ENCODE measurements at regions of chr9 and their contacts with region 1.

Region 1: GRCh38 chr9:68749568-68750279 is 44.7 kb downstream of the PIP5K1B start:
- DNase-seq: no peak
- ATAC-seq: no peak
- H3K4me3 ChIP-seq: no peak overlapping the region
- H3K27ac ChIP-seq: no peak overlapping the region
- H3K4me1 ChIP-seq: no peaks in the 10 kb centered on the region
- H3K27me3 ChIP-seq: peaks cover 18% of the 10 kb centered on the region; the same call in 1 of the 2 replicates
- CTCF ChIP-seq: no peak
- POLR2A ChIP-seq: no peak
- RAD21 ChIP-seq: no peak

Region 2: DNA sequence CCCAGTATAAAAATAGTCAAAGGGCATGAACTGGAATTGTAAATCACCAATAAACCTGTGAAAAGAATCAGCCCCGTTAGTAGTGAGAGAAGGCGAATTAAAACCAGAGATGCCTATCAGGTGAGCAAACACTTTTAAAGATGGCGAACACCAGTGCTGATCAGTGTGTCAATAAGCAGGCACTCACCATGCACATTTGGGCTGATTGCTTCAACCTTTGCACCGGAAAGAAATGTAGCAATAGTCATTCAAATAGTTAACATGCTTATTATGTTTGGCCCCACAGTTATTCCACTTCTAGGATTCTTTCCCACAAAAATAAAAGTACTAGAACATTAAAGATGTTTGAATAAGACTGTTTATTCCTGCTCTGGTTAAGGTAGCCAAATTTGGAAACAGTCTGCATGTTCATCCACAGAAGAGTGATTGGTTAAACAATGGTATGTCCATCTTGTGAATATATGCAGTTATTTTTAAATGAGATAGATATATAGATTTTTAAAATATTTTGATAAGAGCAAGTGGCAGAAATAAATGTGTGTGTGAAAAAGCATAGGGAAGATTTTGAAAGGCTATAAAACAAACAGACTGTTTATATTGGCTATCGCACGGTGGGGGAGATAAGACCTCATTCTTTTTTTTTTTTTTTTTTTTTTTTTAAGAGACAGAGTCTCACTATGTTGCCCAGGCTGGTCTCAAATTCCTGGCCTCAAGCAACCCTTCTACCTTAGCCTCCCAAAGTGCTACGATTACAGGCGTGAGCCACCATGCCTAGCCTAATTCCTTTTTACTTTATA is 67.6 kb after region 1 on chr9:
- CTCF ChIA-PET with region 1: no interaction called
- POLR2A ChIA-PET with region 1: no interaction called
- RAD21 ChIA-PET with region 1: no interaction called
- intact Hi-C with region 1: loop called (anchors 10 kb)
- DNase-seq: no peak
- ATAC-seq: no peak
- H3K4me3 ChIP-seq: no peak overlapping the region
- H3K27ac ChIP-seq: no peak overlapping the region
- H3K4me1 ChIP-seq: no peaks in the 10 kb centered on the region
- H3K27me3 ChIP-seq: peaks cover 16% of the 10 kb centered on the region; the same call in 1 of the 2 replicates
- CTCF ChIP-seq: no peak
- POLR2A ChIP-seq: no peak
- RAD21 ChIP-seq: no peak

Region 3: DNA sequence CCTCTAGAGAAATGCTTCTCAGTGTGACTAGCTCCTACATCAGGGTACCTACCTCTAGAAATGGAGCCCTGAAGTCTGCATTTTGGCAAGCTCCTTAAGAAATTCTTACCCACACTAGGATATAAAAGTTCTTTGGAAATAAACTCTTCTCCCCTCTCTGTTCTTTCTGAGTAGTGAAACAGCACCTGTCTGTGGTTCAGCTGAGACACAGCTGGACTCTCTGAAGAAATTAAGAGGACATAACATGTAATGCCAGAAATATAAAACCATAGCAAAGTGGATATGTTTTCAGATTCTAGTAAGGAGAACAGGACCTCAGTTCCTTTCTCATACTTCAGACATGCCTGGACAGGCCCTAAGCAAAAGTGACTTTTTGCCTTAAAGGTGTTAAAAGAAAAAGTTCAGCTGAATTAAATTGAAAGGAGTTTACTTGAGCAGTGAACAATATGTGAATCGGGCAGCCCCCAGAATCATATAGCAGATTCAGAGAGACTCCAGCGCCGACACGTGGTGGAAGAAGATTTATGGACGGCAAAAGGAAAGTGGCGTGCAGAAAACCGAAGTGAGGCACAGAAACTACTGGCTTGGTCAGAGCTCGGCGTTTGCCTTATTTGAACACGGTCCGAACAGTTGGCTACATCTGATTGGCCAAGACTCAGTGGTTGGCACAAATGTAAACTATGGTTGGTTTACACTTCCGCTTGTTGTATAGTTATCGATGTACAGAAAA is 199.7 kb after region 1 on chr9:
- CTCF ChIA-PET with region 1: no interaction called
- POLR2A ChIA-PET with region 1: no interaction called
- RAD21 ChIA-PET with region 1: no interaction called
- intact Hi-C with region 1: loop called (anchors 10 kb)
- DNase-seq: no peak
- ATAC-seq: no peak
- H3K4me3 ChIP-seq: no peak overlapping the region
- H3K27ac ChIP-seq: no peak overlapping the region
- H3K4me1 ChIP-seq: no peaks in the 10 kb centered on the region
- H3K27me3 ChIP-seq: peaks cover 38% of the 10 kb centered on the region
- CTCF ChIP-seq: no peak
- POLR2A ChIP-seq: no peak
- RAD21 ChIP-seq: no peak

Region 4: DNA sequence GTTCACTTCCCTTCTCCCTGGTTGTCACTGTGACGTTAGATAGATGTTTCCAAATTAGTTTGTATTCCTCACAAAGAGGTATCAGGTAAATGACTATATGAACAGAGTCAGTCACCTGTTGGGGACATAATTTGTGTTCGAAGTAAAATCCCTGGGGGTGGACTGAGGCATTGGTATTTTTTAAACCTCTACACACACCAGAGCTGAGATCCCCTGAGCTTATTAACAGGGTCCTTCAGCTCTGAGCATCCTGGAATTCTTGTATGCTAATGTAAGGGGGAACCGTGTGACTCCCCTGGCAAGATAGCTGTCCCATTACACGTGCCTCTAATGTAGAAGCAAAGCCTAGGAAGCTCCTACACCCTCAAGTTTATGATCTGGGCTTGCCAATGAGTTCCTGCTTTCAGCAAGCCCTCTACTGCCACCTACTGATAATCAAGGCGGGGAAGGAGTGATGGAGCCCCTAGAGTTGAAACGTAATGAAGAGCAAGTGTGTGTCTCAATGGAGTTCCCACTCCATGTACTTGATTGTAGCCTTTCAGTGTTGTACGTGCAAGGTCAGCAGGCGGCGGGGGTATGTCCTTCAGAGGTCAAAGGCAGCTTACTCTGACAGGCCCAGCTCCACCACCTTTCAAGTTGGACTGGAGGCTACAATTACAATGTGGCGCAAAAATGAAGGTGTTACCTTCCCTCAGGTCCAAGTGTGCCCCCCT is 249.8 kb after region 1 on chr9:
- CTCF ChIA-PET with region 1: no interaction called
- POLR2A ChIA-PET with region 1: no interaction called
- RAD21 ChIA-PET with region 1: no interaction called
- intact Hi-C with region 1: loop called (anchors 10 kb)
- DNase-seq: peak; percentile 61
- ATAC-seq: peak; percentile 97
- H3K4me3 ChIP-seq: no peak overlapping the region
- H3K27ac ChIP-seq: no peak overlapping the region
- H3K4me1 ChIP-seq: no peaks in the 10 kb centered on the region
- H3K27me3 ChIP-seq: peaks cover 7% of the 10 kb centered on the region; the same call in 1 of the 2 replicates
- CTCF ChIP-seq: peak; percentile 81 to 94 (median 86)
- POLR2A ChIP-seq: no peak
- RAD21 ChIP-seq: peak; percentile 84

Region 5: DNA sequence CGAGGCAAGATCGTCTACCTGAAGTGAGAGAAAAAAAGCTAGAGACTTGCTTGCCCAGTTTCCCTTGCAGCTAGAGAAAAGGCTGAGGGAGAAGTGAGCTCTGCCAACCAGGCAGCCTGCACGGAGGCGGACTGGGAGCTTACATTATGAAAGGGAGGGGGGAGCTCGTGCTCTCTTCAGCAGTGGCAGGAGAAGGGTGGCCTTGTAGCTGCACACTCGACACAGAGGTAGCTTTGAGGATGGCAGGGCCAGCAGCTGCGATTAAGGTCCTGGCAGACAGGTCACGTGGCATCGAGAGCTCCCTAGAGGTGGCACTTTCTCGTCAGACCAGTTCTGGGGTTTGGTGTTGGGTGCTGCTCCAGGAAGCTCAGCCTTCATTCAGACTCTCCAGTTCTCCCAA is 895.8 kb after region 1 on chr9:
- CTCF ChIA-PET with region 1: no interaction called
- POLR2A ChIA-PET with region 1: no interaction called
- RAD21 ChIA-PET with region 1: no interaction called
- intact Hi-C with region 1: loop called (anchors 10 kb)
- DNase-seq: peak; percentile 8
- ATAC-seq: peak; percentile 84
- H3K4me3 ChIP-seq: no peak overlapping the region
- H3K27ac ChIP-seq: no peak overlapping the region
- H3K4me1 ChIP-seq: peaks cover 3 to 7% of the 10 kb centered on the region in 2 experiments; a peak in 3 of 4 replicates
- H3K27me3 ChIP-seq: no peaks in the 10 kb centered on the region
- CTCF ChIP-seq: no peak
- POLR2A ChIP-seq: no peak
- RAD21 ChIP-seq: no peak

Measured in HCT116 (cell line).